GM10248 (cell line): ENCODE measurements at regions of chr6 and their contacts with region 1.

Region 1: DNA sequence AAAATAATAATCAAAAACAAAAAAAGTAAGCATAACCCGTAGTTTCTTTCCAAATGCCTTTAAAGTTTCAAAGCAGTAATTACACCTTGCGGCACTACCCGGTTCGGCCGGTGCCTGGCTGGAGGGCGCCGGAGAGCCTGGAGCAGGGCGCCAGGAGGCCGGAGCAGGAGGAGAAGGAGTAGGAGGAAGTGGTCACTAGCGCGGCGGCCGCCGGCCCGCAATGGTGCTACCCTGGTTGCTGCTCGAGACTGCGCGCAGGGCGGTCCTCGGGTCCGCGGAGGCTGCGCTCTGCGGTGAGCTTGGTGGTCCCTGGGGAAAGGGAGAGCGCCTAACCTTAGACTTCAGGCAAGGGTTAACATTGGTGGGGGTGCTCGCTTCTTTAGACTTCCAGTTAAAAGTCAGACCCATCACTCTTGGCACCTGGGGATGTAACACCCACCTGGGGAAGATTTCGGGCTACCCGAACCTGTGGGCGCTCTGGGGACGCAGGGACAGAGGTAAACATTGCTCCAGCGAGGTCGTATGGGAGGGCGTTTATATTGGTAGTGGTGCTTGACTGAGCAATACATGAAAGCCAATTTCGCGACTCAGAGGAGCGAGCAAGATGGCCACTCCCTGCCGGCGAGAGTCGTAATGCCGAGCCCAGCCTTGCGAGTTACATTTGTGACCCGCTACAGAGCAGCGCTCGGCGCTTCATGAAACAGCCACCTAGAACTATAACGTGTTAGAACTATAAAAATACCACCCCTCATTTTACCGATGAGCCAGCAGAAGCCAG is 5.8 kb upstream of the USP45 start:
- DNase-seq: peak; percentile 85
- CTCF ChIP-seq: peak; percentile 87

Region 2: DNA sequence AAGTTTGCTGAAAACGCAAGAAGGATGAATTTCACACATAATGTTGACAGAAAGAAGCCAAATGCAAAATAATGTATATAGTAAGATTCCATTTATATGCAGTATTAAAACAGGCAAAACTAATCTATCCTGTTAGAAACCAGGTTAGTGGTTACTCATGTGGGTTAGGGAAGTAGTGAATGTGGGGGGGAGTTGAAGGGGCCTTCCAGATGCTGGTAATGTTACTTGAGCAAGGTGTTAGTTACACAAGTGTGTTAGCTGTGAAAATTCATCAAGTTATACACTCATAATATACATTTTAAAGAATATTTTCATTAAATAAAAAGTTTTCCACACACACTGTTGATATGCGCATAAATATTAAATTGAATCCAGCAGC is 35.7 kb before region 1 on chr6:
- CTCF ChIA-PET with region 1: interaction called, 13 read pairs
- POLR2A ChIA-PET with region 1: interaction called, 5 read pairs
- DNase-seq: no peak
- CTCF ChIP-seq: no peak

Region 3: DNA sequence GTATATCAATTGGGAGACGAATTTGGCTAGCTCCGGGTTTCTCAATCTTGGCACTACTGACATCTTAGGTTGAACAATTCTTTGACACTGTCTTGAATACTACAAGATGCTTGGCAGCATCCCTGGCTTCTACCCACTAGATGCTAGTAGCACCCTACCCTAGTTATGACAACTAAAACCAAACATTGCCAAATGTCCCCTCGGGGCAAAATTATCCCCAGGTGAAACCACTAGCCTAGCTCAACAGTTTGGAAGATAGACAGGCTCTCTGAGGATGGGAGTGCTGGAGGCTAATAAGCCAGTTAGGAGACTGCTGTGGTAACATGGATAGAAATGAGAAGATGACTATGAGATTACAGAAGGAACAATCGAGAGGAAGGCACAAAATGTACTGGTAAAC is 26.5 kb after region 1 on chr6:
- CTCF ChIA-PET with region 1: interaction called, 10 read pairs
- POLR2A ChIA-PET with region 1: no interaction called
- DNase-seq: no peak
- CTCF ChIP-seq: no peak

Region 4: GRCh38 chr6:100023798-100024197 is 502.8 kb after region 1 on chr6:
- CTCF ChIA-PET with region 1: no interaction called
- POLR2A ChIA-PET with region 1: no interaction called
- DNase-seq: no peak
- CTCF ChIP-seq: no peak